K562 (cell line): ENCODE measurements at regions of chr11 and their contacts with region 1.

Region 1: GRCh38 chr11:66936311-66936711 is 21.9 kb downstream of the PC start:
- DNase-seq: no peak
- ATAC-seq: no peak
- H3K4me3 ChIP-seq: no peak overlapping the region
- H3K27ac ChIP-seq: peak overlapping the region; percentile 15
- H3K4me1 ChIP-seq: peaks cover 18 to 53% of the 10 kb centered on the region in 2 experiments
- H3K27me3 ChIP-seq: no peaks in the 10 kb centered on the region
- CTCF ChIP-seq: no peak
- EP300 ChIP-seq: no peak
- POLR2A ChIP-seq: no peak
- RAD21 ChIP-seq: no peak

Region 2: GRCh38 chr11:66920978-66921784 is 15.1 kb before region 1 on chr11:
- CTCF ChIA-PET with region 1: no interaction called
- POLR2A ChIA-PET with region 1: interaction called, 10 read pairs
- in situ Hi-C with region 1: no loop called
- intact Hi-C with region 1: no loop called
- DNase-seq: peak in 2 of 4 experiments; percentile 59 to 66
- ATAC-seq: peak; percentile 88
- H3K4me3 ChIP-seq: no peak overlapping the region
- H3K27ac ChIP-seq: peak overlapping the region; percentile 81
- H3K4me1 ChIP-seq: peaks cover 7 to 28% of the 10 kb centered on the region in 2 experiments; a peak in 4 of 5 replicates
- H3K27me3 ChIP-seq: no peaks in the 10 kb centered on the region
- CTCF ChIP-seq: no peak
- EP300 ChIP-seq: peak; percentile 3; the same call in 1 of the 2 replicates
- POLR2A ChIP-seq: 0 out of 2 replicates have a peak, but pooled peaks have one; percentile 26
- RAD21 ChIP-seq: no peak

Region 3: GRCh38 chr11:66950113-66950535 is 13.8 kb after region 1 on chr11:
- CTCF ChIA-PET with region 1: no interaction called
- POLR2A ChIA-PET with region 1: interaction called, 10 read pairs
- in situ Hi-C with region 1: no loop called
- intact Hi-C with region 1: no loop called
- DNase-seq: peak; percentile 77 to 86 (median 79)
- ATAC-seq: peak; percentile 89
- H3K4me3 ChIP-seq: no peak overlapping the region
- H3K27ac ChIP-seq: peak overlapping the region; percentile 72; the same call in 2 of the 3 replicates
- H3K4me1 ChIP-seq: peaks cover 0 to 10% of the 10 kb centered on the region in 2 experiments; a peak in 3 of 5 replicates
- H3K27me3 ChIP-seq: no peaks in the 10 kb centered on the region
- CTCF ChIP-seq: no peak
- EP300 ChIP-seq: peak; percentile 68
- POLR2A ChIP-seq: no peak
- RAD21 ChIP-seq: no peak